ENCODE measurements at regions of chr14 and their contacts with region 1.

Region 1: DNA sequence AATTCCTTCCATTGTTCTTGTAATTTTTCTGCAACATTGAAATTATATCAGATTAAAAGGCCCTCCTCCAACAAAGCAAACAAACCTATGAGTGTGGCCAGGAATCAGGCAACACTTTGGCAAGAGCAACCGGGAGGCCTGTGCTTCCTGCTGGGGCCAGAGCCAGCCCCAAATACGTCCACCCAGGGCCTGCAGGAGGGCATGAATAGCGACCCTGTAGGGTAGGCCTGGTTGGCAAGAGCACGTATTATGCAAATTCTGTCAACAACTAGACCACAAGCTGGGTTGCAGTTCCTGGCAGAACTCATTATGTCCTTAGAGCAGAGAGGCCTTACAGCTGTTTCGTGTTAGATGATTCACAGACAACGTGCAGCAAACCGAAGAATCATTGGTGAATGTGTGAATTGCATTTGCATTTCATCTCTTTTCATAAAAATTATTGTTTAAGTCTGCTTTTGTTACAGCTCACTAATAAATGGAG is 26.9 kb upstream of the LGALS3 start:
- DNase-seq: peak; percentile 100
- ATAC-seq: peak; percentile 77
- H3K4me3 ChIP-seq: peak overlapping the region; percentile 51
- H3K27ac ChIP-seq: peak overlapping the region; percentile 89
- H3K4me1 ChIP-seq: peaks cover 49% of the 10 kb centered on the region
- H3K27me3 ChIP-seq: no peaks in the 10 kb centered on the region
- CTCF ChIP-seq: no peak

Region 2: GRCh38 chr14:54854181-54854580 is 248.0 kb before region 1 on chr14:
- CTCF ChIA-PET with region 1: no interaction called
- POLR2A ChIA-PET with region 1: no interaction called
- intact Hi-C with region 1: no loop called
- DNase-seq: no peak
- ATAC-seq: no peak
- H3K4me3 ChIP-seq: no peak overlapping the region
- H3K27ac ChIP-seq: no peak overlapping the region
- H3K4me1 ChIP-seq: no peaks in the 10 kb centered on the region
- H3K27me3 ChIP-seq: no peaks in the 10 kb centered on the region
- CTCF ChIP-seq: no peak

Region 3: DNA sequence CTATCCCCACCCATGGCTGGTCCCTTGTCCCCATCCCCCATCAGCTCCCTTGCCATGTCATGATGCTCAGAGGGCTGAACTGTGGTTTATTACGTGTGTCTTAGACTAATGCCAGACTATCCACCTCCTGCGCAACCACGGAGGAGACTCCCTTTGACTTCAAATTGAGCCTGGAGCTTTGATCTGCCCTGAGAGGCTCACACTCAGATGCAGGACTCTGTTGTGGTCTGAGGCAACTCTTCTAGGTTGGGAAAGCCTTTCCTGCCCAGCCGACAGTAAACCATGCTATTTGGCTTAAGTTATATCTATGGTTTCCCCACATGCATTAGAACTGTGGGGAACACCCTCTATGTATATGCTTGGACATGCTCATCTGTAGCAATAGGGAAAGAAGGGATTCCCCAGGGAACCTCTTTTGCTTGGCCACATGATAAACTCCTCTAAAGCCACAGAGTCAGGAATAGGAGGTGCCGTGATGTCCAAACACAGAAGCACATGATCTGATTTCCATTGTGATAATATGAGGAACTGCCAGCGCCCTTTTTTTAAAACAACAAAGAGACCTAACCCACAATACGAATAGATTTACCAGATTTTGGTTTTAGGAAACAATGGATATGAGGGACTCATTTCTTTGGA is 15.7 kb after region 1 on chr14:
- CTCF ChIA-PET with region 1: no interaction called
- POLR2A ChIA-PET with region 1: no interaction called
- intact Hi-C with region 1: no loop called
- DNase-seq: no peak
- ATAC-seq: no peak
- H3K4me3 ChIP-seq: no peak overlapping the region
- H3K27ac ChIP-seq: no peak overlapping the region
- H3K4me1 ChIP-seq: peaks cover 14% of the 10 kb centered on the region
- H3K27me3 ChIP-seq: no peaks in the 10 kb centered on the region
- CTCF ChIP-seq: no peak

Region 4: GRCh38 chr14:55160989-55161388 is 58.8 kb after region 1 on chr14:
- CTCF ChIA-PET with region 1: interaction called, 12 read pairs
- POLR2A ChIA-PET with region 1: interaction called, 3 read pairs
- intact Hi-C with region 1: loop called (anchors 1 kb)
- DNase-seq: peak; percentile 79
- ATAC-seq: peak; percentile 94
- H3K4me3 ChIP-seq: no peak overlapping the region
- H3K27ac ChIP-seq: no peak overlapping the region
- H3K4me1 ChIP-seq: no peaks in the 10 kb centered on the region
- H3K27me3 ChIP-seq: no peaks in the 10 kb centered on the region
- CTCF ChIP-seq: peak; percentile 92

Measured in PC-3 (cell line).